Activated CD4-positive, alpha-beta memory T cell treated with anti-CD3 and anti-CD28 coated beads for 36 hours (primary cell): ENCODE measurements at regions of chr1 and their contacts with region 1.

Region 1: GRCh38 chr1:52552505-52553361 is at the start of gene TUT4:
- DNase-seq: peak; percentile 87
- H3K4me3 Mint-ChIP-seq: peak within 1 kb of the TSS; percentile 63
- H3K27ac Mint-ChIP-seq: no peak within 1 kb of the TSS
- H3K4me1 Mint-ChIP-seq: peaks cover 32% of the 10 kb centered on the region
- H3K27me3 Mint-ChIP-seq: no peaks in the 10 kb centered on the region
- total RNA-seq, gene TUT4: 54.6 to 62.1 TPM

Region 2: GRCh38 chr1:52404116-52404986 is 148.4 kb before region 1 on chr1 and contains the starts of genes ORC1 and PRPF38A:
- CTCF ChIA-PET with region 1: interaction called, 4 read pairs
- POLR2A ChIA-PET with region 1: interaction called, 13 read pairs
- intact Hi-C with region 1: loop called (anchors 1 kb)
- DNase-seq: peak; percentile 99
- H3K4me3 Mint-ChIP-seq: peak within 1 kb of the TSS; percentile 100
- H3K27ac Mint-ChIP-seq: peak within 1 kb of the TSS; percentile 96
- H3K4me1 Mint-ChIP-seq: peaks cover 39% of the 10 kb centered on the region
- H3K27me3 Mint-ChIP-seq: no peaks in the 10 kb centered on the region
- total RNA-seq, gene ORC1: 42.5 to 43.0 TPM
- total RNA-seq, gene PRPF38A: 74.6 to 79.7 TPM

Region 3: GRCh38 chr1:52520148-52520547 is 32.6 kb before region 1 on chr1:
- CTCF ChIA-PET with region 1: no interaction called
- POLR2A ChIA-PET with region 1: interaction called, 4 read pairs
- intact Hi-C with region 1: loop called (anchors 1 kb)
- DNase-seq: peak; percentile 14
- H3K4me3 Mint-ChIP-seq: no peak overlapping the region
- H3K27ac Mint-ChIP-seq: peak overlapping the region; percentile 71
- H3K4me1 Mint-ChIP-seq: peaks cover 49% of the 10 kb centered on the region
- H3K27me3 Mint-ChIP-seq: no peaks in the 10 kb centered on the region

Region 4: GRCh38 chr1:52588535-52588934 is 35.8 kb after region 1 on chr1:
- CTCF ChIA-PET with region 1: no interaction called
- POLR2A ChIA-PET with region 1: no interaction called
- intact Hi-C with region 1: no loop called
- DNase-seq: no peak
- H3K4me3 Mint-ChIP-seq: no peak overlapping the region
- H3K27ac Mint-ChIP-seq: no peak overlapping the region
- H3K4me1 Mint-ChIP-seq: no peaks in the 10 kb centered on the region
- H3K27me3 Mint-ChIP-seq: no peaks in the 10 kb centered on the region

Region 5: DNA sequence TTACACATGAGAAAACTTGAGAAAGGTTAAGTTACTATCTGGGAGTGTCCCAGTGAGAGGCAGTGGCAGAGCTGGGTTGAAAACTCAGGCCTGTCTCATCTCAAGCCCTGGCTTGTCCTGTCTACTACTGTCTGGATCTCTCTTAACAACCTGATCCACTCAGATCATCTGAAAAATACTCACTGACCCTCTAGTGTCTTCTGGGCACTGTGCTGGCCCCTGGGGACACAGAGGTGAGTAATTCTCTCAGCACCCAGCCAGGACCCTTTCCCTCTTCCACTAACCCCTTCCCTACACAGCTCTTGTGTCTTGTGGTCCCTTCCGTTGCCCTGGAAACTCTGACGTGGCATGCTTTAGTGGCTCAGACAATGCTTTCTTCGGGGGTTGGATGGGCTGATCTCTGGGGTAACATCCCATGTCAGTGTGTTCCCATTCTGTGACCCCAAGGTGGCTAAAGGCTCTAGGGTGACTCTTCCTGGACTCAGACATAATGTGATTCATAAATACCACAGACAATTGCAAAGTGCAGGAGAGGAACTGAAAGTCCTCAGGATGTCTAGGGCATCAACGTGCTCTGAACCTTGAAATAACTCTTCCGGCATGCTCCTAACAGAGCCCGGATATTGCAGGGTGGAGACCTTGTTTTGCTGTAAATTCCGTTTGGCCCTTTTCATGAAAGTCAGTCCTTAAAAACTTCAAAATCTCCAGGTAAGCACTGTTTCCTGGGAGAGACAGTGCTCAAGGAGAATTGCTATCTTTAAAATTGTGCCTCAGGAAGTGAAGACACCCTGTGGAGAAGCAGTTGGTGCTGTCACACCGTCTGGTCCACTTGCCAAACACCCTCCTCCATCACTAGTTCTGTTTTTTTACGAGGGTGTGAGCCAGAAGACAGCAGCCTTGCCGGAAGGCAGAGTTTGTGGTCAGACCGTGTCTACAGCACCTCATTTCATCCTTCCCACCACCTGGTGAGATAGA is 84.3 kb after region 1 on chr1:
- CTCF ChIA-PET with region 1: no interaction called
- POLR2A ChIA-PET with region 1: interaction called, 14 read pairs
- intact Hi-C with region 1: loop called (anchors 1 kb)
- DNase-seq: peak; percentile 86
- H3K4me3 Mint-ChIP-seq: peak overlapping the region; percentile 65
- H3K27ac Mint-ChIP-seq: peak overlapping the region; percentile 98
- H3K4me1 Mint-ChIP-seq: peaks cover 75% of the 10 kb centered on the region
- H3K27me3 Mint-ChIP-seq: no peaks in the 10 kb centered on the region

Region 6: DNA sequence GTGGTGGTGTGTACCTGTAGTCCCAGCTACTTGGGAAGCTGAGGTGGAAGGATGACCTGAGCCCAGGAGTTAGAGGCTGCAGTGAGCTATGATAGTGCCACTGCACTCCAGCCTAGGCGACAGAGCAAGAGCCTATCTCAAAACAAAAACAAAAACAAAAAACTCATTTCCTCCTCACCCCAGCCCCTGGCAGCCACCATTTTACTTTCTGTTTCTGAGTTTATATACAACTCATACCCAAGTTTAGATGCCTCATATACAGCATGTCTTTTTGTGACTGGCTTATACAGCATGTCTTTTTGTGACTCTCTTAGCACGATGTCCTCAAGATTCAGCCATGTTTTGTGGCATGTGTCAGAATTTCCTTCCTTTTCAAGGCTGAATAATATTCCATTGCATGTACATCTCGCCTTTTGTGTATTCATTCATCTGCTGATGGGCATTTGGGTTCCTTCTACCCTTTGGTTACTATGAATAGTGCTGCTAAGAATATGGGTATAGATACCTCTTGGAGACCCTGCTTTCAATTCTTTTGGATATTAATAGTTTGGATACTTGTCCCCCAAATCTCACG is 130.7 kb after region 1 on chr1:
- CTCF ChIA-PET with region 1: interaction called, 5 read pairs
- POLR2A ChIA-PET with region 1: interaction called, 4 read pairs
- intact Hi-C with region 1: loop called (anchors 1 kb)
- DNase-seq: no peak
- H3K4me3 Mint-ChIP-seq: no peak overlapping the region
- H3K27ac Mint-ChIP-seq: peak overlapping the region; percentile 28
- H3K4me1 Mint-ChIP-seq: peaks cover 6% of the 10 kb centered on the region
- H3K27me3 Mint-ChIP-seq: no peaks in the 10 kb centered on the region